ENCODE measurements at regions of chr13 and their contacts with region 1.

Region 1: GRCh38 chr13:108322206-108322824 is 52.8 kb downstream of the TNFSF13B start:
- DNase-seq: no peak
- H3K4me3 Mint-ChIP-seq: no peak overlapping the region
- H3K27ac Mint-ChIP-seq: no peak overlapping the region
- H3K4me1 Mint-ChIP-seq: peaks cover 36% of the 10 kb centered on the region
- H3K27me3 Mint-ChIP-seq: no peaks in the 10 kb centered on the region

Region 2: DNA sequence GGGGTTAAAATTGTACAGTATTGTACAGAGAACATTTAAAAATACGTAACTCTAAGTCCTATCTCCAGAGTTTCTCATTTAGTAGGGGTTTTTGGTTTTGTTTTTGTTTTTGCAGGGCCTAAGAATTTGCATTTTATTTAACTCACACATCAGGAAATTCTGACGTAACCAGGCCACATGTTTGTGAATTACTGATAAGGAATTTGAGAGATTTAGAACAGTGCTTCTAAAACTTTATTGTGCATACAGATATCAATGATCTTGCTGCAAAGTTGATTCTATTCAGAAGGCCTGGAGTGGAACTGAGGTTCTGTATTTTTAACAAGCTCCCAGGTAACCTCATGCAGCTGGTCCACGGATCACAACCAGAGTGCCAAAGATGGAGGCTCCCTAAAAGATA is 156.2 kb before region 1 on chr13:
- CTCF ChIA-PET with region 1: no interaction called
- POLR2A ChIA-PET with region 1: no interaction called
- intact Hi-C with region 1: no loop called
- DNase-seq: no peak
- H3K4me3 Mint-ChIP-seq: no peak overlapping the region
- H3K27ac Mint-ChIP-seq: no peak overlapping the region
- H3K4me1 Mint-ChIP-seq: no peaks in the 10 kb centered on the region
- H3K27me3 Mint-ChIP-seq: peaks cover 2% of the 10 kb centered on the region

Region 3: DNA sequence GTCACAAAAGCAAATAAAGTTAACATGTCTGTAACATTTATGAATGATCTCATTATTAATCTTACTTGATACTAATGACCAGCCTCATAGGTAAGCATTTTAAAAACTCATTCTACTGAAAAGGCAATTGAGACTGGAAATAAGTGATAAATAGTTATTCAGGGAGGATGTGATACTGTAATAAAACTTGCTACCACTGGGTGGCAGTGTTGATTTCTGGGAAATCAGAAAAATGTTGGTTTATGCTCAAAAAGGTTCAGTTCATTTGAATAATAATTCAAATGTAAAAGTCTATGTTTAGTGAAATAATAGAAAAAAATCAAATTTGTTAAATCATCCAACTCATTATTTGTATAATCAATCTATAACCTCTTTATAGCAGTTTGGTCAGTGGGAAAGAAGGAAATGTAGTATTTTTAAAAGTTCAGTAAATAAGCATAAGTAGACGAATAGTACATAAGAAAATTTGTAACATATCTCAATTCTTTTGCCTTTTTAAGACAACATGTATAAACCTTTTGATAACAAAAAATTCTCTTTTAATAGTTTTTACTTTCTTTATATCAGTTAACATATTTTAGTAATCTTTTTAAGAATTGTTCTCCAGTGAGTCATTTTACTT is 94.6 kb before region 1 on chr13:
- CTCF ChIA-PET with region 1: no interaction called
- POLR2A ChIA-PET with region 1: no interaction called
- intact Hi-C with region 1: loop called (anchors 5 kb)
- DNase-seq: no peak
- H3K4me3 Mint-ChIP-seq: no peak overlapping the region
- H3K27ac Mint-ChIP-seq: no peak overlapping the region
- H3K4me1 Mint-ChIP-seq: peaks cover 51% of the 10 kb centered on the region
- H3K27me3 Mint-ChIP-seq: no peaks in the 10 kb centered on the region

Measured in activated CD4-positive, alpha-beta memory T cell treated with anti-CD3 and anti-CD28 coated beads for 36 hours (primary cell).